B cell (primary cell): ENCODE measurements at regions of chr2 and their contacts with region 1.

Region 1: GRCh38 chr2:85595301-85596025 is at the start of gene RNF181:
- DNase-seq: peak; percentile 94
- ATAC-seq: peak; percentile 100
- H3K4me3 ChIP-seq: peak within 1 kb of the TSS; percentile 65 to 93 (median 86)
- H3K4me3 Mint-ChIP-seq: peak within 1 kb of the TSS; percentile 92
- H3K27ac ChIP-seq: peak within 1 kb of the TSS; percentile 76 to 81
- H3K27ac Mint-ChIP-seq: peak within 1 kb of the TSS; percentile 95
- H3K4me1 ChIP-seq: peaks cover 17 to 23% of the 10 kb centered on the region in 2 donors
- H3K4me1 Mint-ChIP-seq: peaks cover 29% of the 10 kb centered on the region
- H3K27me3 ChIP-seq: no peaks in the 10 kb centered on the region
- H3K27me3 Mint-ChIP-seq: no peaks in the 10 kb centered on the region
- CTCF ChIP-seq: no peak
- total RNA-seq, gene RNF181: 67.3 and 76.6 TPM in 2 replicates

Region 2: GRCh38 chr2:85369500-85369899 is 226.0 kb before region 1 on chr2:
- CTCF ChIA-PET with region 1: no interaction called
- POLR2A ChIA-PET with region 1: no interaction called
- intact Hi-C with region 1: no loop called
- DNase-seq: no peak
- ATAC-seq: no peak
- H3K4me3 ChIP-seq: no peak overlapping the region
- H3K4me3 Mint-ChIP-seq: no peak overlapping the region
- H3K27ac ChIP-seq: no peak overlapping the region
- H3K27ac Mint-ChIP-seq: no peak overlapping the region
- H3K4me1 ChIP-seq: no peaks in the 10 kb centered on the region
- H3K4me1 Mint-ChIP-seq: no peaks in the 10 kb centered on the region
- H3K27me3 ChIP-seq: no peaks in the 10 kb centered on the region
- H3K27me3 Mint-ChIP-seq: no peaks in the 10 kb centered on the region
- CTCF ChIP-seq: no peak

Region 3: GRCh38 chr2:85577386-85578242 is 17.8 kb before region 1 on chr2 and contains the start of gene VAMP8:
- CTCF ChIA-PET with region 1: no interaction called
- POLR2A ChIA-PET with region 1: interaction called, 13 read pairs
- intact Hi-C with region 1: loop called (anchors 1 kb)
- DNase-seq: peak; percentile 68
- ATAC-seq: peak; percentile 67
- H3K4me3 ChIP-seq: peak within 1 kb of the TSS; percentile 50 to 97 (median 70)
- H3K4me3 Mint-ChIP-seq: peak within 1 kb of the TSS; percentile 93
- H3K27ac ChIP-seq: peak within 1 kb of the TSS; percentile 70 to 87
- H3K27ac Mint-ChIP-seq: peak within 1 kb of the TSS; percentile 96
- H3K4me1 ChIP-seq: peaks cover 20 to 36% of the 10 kb centered on the region in 2 donors
- H3K4me1 Mint-ChIP-seq: peaks cover 37% of the 10 kb centered on the region
- H3K27me3 ChIP-seq: no peaks in the 10 kb centered on the region
- H3K27me3 Mint-ChIP-seq: no peaks in the 10 kb centered on the region
- CTCF ChIP-seq: no peak
- total RNA-seq, gene VAMP8: 73.1 and 73.8 TPM in 2 replicates

Region 4: GRCh38 chr2:85584857-85585783 is 10.3 kb before region 1 on chr2:
- CTCF ChIA-PET with region 1: interaction called, 11 read pairs
- POLR2A ChIA-PET with region 1: interaction called, 8 read pairs
- intact Hi-C with region 1: no loop called
- DNase-seq: peak; percentile 43
- ATAC-seq: peak; percentile 26
- H3K4me3 ChIP-seq: peak overlapping the region; percentile 34 to 70 (median 61)
- H3K4me3 Mint-ChIP-seq: peak overlapping the region; percentile 90
- H3K27ac ChIP-seq: peak overlapping the region in 1 of 2 donors; percentile 64
- H3K27ac Mint-ChIP-seq: peak overlapping the region; percentile 90
- H3K4me1 ChIP-seq: peaks cover 25 to 41% of the 10 kb centered on the region in 2 donors
- H3K4me1 Mint-ChIP-seq: peaks cover 49% of the 10 kb centered on the region
- H3K27me3 ChIP-seq: no peaks in the 10 kb centered on the region
- H3K27me3 Mint-ChIP-seq: no peaks in the 10 kb centered on the region
- CTCF ChIP-seq: no peak